PC-9 (cell line): ENCODE measurements at regions of chr4 and their contacts with region 1.

Region 1: DNA sequence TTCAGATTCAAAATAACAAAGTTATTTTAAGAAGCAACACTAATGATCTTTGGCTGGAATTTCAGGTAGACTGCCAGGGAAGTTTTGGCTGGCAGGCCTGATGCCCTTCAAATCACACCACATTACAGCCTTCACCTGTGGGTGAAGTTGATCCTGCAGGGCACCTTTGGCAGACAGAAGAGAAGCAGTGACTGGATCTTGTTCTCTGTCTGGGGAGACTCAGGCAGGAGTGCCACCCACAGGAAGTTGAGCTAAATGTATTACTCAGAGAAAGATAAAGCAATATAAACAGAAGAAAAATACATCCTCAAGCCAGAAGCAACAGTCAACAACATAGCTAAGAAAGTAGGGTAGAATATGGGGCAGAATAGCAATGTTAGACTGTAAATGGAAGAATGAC is 12.8 kb upstream of the CFAP299 start:
- DNase-seq: peak in 1 of 2 experiments; percentile 12
- H3K4me3 ChIP-seq: no peak overlapping the region
- H3K27ac ChIP-seq: no peak overlapping the region
- H3K4me1 ChIP-seq: no peaks in the 10 kb centered on the region
- H3K27me3 ChIP-seq: no peaks in the 10 kb centered on the region
- CTCF ChIP-seq: no peak

Region 2: DNA sequence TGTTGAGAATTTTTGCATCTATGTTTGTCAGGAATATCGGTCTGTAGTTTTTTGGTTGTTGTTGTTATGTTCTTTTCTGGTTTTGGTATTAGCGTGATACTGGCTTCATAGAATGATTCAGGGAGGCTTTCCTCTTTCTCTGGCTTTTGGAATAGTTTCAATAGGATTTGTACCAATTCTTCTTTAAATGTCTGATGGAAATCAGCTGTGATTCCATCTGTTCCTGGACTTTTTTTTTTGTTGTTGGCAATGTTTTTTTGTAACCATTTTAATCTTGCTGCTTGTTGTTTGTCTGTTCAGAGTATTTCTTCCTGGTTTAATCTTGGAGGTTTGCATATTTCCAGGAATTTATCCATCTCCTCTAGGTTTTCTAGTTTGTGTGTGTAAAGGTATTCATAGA is 833.2 kb before region 1 on chr4:
- CTCF ChIA-PET with region 1: interaction called, 10 read pairs
- POLR2A ChIA-PET with region 1: no interaction called
- intact Hi-C with region 1: no loop called
- DNase-seq: no peak
- H3K4me3 ChIP-seq: no peak overlapping the region
- H3K27ac ChIP-seq: no peak overlapping the region
- H3K4me1 ChIP-seq: no peaks in the 10 kb centered on the region
- H3K27me3 ChIP-seq: no peaks in the 10 kb centered on the region
- CTCF ChIP-seq: no peak

Region 3: GRCh38 chr4:80221161-80221560 is 101.6 kb before region 1 on chr4:
- CTCF ChIA-PET with region 1: no interaction called
- POLR2A ChIA-PET with region 1: no interaction called
- intact Hi-C with region 1: loop called (anchors 5 kb)
- DNase-seq: no peak
- H3K4me3 ChIP-seq: no peak overlapping the region
- H3K27ac ChIP-seq: no peak overlapping the region
- H3K4me1 ChIP-seq: no peaks in the 10 kb centered on the region
- H3K27me3 ChIP-seq: no peaks in the 10 kb centered on the region
- CTCF ChIP-seq: peak; percentile 56

Region 4: DNA sequence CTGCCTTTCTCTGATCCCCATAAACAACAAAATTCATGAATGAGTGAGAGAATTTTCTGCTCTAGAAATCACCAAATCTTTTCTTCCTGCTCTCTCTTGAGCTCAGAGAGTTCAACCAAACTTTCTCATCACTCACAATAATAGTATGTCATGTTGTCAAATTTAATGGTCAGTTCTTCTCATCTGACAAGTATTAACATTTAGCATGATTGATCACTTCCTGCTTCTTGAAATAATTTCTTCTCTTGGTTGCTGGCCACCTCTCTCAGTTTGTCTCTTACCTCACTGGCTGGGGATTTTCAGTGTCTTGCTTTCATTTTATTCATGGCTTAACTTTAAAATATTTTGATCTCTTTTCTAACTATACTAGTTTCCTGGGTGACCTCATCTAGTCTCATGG is 81.7 kb before region 1 on chr4:
- CTCF ChIA-PET with region 1: no interaction called
- POLR2A ChIA-PET with region 1: no interaction called
- intact Hi-C with region 1: no loop called
- DNase-seq: no peak
- H3K4me3 ChIP-seq: no peak overlapping the region
- H3K27ac ChIP-seq: no peak overlapping the region
- H3K4me1 ChIP-seq: no peaks in the 10 kb centered on the region
- H3K27me3 ChIP-seq: no peaks in the 10 kb centered on the region
- CTCF ChIP-seq: no peak

Region 5: DNA sequence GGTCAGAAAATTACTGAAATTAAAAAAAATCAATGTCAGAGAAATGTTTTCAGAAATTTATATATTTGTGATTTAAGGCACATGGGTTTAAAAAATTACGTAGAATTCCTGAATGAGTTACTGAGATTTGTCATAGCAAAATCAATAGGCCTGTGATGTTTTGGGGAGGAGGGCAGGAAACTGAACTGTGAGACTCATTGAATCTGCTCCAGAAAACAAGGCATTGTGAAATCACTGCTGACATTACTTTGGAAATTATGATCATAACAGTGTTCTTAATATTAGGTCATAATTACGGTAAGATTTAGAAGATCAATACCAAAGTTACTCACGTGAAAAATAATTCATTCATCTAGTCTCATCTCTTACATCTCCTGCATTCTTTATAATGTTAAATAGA is 50.9 kb before region 1 on chr4:
- CTCF ChIA-PET with region 1: no interaction called
- POLR2A ChIA-PET with region 1: no interaction called
- intact Hi-C with region 1: no loop called
- DNase-seq: no peak
- H3K4me3 ChIP-seq: no peak overlapping the region
- H3K27ac ChIP-seq: no peak overlapping the region
- H3K4me1 ChIP-seq: no peaks in the 10 kb centered on the region
- H3K27me3 ChIP-seq: no peaks in the 10 kb centered on the region
- CTCF ChIP-seq: no peak

Region 6: DNA sequence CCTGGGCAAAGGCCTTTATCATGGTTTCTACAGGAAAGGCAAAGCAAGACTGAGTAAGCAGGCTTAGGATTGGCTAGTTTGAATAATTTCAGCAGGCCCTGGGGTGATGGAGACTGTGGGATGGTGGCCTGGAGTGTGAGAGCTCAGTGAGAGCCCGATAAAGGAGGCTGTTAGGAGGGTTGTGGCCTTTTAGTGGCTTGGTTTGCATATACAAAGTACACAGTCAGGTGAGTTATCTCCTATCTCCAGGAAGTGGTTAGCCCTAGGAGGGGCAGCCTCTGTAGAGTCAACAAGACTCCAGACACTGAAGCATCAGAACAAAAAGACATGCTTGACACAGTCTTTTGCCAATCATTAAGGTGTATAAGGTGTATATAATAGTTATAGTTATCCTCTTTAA is 170.0 kb after region 1 on chr4:
- CTCF ChIA-PET with region 1: no interaction called
- POLR2A ChIA-PET with region 1: no interaction called
- intact Hi-C with region 1: no loop called
- DNase-seq: peak in 1 of 2 experiments; percentile 12
- H3K4me3 ChIP-seq: no peak overlapping the region
- H3K27ac ChIP-seq: no peak overlapping the region
- H3K4me1 ChIP-seq: no peaks in the 10 kb centered on the region
- H3K27me3 ChIP-seq: no peaks in the 10 kb centered on the region
- CTCF ChIP-seq: no peak

Region 7: GRCh38 chr4:80655662-80656061 is 332.9 kb after region 1 on chr4:
- CTCF ChIA-PET with region 1: no interaction called
- POLR2A ChIA-PET with region 1: no interaction called
- intact Hi-C with region 1: no loop called
- DNase-seq: no peak
- H3K4me3 ChIP-seq: no peak overlapping the region
- H3K27ac ChIP-seq: no peak overlapping the region
- H3K4me1 ChIP-seq: no peaks in the 10 kb centered on the region
- H3K27me3 ChIP-seq: no peaks in the 10 kb centered on the region
- CTCF ChIP-seq: no peak